Posterior vena cava (tissue), 2 donors: ENCODE measurements at regions of chr7 and their contacts with region 1.

Region 1: GRCh38 chr7:25559581-25560367 is 331.5 kb upstream of the NPVF start:
- DNase-seq: no peak

Region 2: GRCh38 chr7:25282194-25282593 is 277.6 kb before region 1 on chr7:
- intact Hi-C with region 1: no loop called
- DNase-seq: no peak

Region 3: GRCh38 chr7:25389489-25390106 is 170.2 kb before region 1 on chr7:
- intact Hi-C with region 1: loop called (anchors 5 kb)
- DNase-seq: no peak

Region 4: GRCh38 chr7:25578991-25579777 is 19.4 kb after region 1 on chr7:
- intact Hi-C with region 1: loop called in 1 of 2 experiments (anchors 1 kb)
- DNase-seq: no peak